CD8-positive, alpha-beta T cell (primary cell): ENCODE measurements at regions of chr7 and their contacts with region 1.

Region 1: DNA sequence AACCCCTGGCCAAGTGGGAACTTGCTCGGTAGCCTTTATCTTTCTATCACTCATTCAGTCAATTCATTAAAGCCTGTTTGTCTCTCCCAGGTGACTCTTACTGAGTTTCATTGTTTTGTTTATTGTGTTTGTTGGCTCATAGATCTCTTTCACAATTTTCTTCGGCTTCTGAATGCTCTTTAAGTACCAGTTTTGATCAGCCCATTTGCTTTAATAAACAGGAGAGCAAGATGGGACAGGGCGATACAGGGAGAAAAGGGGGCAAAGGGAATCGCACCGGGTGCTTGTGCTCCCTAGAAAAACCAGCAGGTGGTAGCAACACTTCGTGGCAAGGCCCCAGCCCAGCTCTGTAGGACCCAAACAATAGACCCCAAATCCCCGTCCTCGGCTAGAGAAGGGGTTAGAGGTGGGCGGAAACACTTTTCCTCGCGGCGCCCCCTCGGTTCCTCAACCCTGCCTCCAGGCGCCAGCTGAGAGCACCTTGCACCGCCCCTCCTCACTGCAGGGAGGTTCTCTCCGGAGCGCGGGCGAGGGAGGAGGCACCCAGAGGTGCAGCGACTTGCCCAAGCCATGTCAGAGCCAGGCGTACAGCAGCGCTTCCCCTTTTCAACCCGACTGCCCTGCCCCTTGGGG is 1.0 kb upstream of the EPHB6 start:
- DNase-seq: peak; percentile 36 to 82 (median 64)
- ATAC-seq: peak; percentile 76
- H3K4me3 ChIP-seq: peak overlapping the region; percentile 58 to 79
- H3K4me3 Mint-ChIP-seq: peak overlapping the region; percentile 98
- H3K27ac ChIP-seq: peak overlapping the region in 1 of 2 experiments; percentile 41
- H3K27ac Mint-ChIP-seq: peak overlapping the region; percentile 91
- H3K4me1 ChIP-seq: peaks cover 9% of the 10 kb centered on the region
- H3K4me1 Mint-ChIP-seq: peaks cover 14% of the 10 kb centered on the region
- H3K27me3 ChIP-seq: no peaks in the 10 kb centered on the region
- H3K27me3 Mint-ChIP-seq: no peaks in the 10 kb centered on the region
- CTCF ChIP-seq: peak; percentile 77

Region 2: DNA sequence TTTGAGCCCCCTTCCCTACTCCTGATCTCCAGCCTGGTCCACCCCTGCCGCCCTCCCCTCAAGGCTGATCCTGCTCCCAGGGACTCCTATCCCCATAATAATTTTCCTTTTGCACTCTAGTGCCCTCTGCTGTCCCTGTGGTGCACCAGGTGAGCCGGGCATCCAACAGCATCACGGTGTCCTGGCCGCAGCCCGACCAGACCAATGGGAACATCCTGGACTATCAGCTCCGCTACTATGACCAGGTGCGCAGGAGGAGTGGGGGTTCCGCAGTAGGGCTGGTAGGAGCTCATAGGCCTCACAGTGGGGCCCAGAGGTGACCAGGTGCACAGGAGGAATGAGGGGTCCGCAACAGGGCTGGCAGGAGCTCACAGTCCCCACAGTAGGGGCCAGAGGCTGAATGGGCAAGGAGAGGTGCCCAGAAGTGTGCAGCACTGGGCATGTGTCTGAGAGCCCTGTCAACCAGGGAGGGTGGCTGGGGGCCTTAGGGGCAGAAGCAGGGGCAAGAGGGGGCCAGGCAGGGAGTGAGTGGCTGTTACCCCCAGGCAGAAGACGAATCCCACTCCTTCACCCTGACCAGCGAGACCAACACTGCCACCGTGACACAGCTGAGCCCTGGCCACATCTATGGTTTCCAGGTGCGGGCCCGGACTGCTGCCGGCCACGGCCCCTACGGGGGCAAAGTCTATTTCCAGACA is 12.7 kb after region 1 on chr7:
- CTCF ChIA-PET with region 1: interaction called, 28 read pairs
- POLR2A ChIA-PET with region 1: no interaction called
- intact Hi-C with region 1: no loop called
- DNase-seq: peak in 2 of 9 experiments; percentile 35 to 40
- ATAC-seq: no peak
- H3K4me3 ChIP-seq: no peak overlapping the region
- H3K4me3 Mint-ChIP-seq: no peak overlapping the region
- H3K27ac ChIP-seq: no peak overlapping the region
- H3K27ac Mint-ChIP-seq: no peak overlapping the region
- H3K4me1 ChIP-seq: no peaks in the 10 kb centered on the region
- H3K4me1 Mint-ChIP-seq: no peaks in the 10 kb centered on the region
- H3K27me3 ChIP-seq: no peaks in the 10 kb centered on the region
- H3K27me3 Mint-ChIP-seq: no peaks in the 10 kb centered on the region
- CTCF ChIP-seq: no peak

Region 3: GRCh38 chr7:142880876-142881505 is 27.1 kb after region 1 on chr7:
- CTCF ChIA-PET with region 1: interaction called, 7 read pairs
- POLR2A ChIA-PET with region 1: no interaction called
- intact Hi-C with region 1: loop called in 1 of 2 experiments (anchors 1 kb)
- DNase-seq: peak; percentile 14 to 70 (median 47)
- ATAC-seq: peak; percentile 80
- H3K4me3 ChIP-seq: no peak overlapping the region
- H3K4me3 Mint-ChIP-seq: no peak overlapping the region
- H3K27ac ChIP-seq: no peak overlapping the region
- H3K27ac Mint-ChIP-seq: no peak overlapping the region
- H3K4me1 ChIP-seq: no peaks in the 10 kb centered on the region
- H3K4me1 Mint-ChIP-seq: no peaks in the 10 kb centered on the region
- H3K27me3 ChIP-seq: peaks cover 0 to 2% of the 10 kb centered on the region in 2 experiments
- H3K27me3 Mint-ChIP-seq: no peaks in the 10 kb centered on the region
- CTCF ChIP-seq: peak; percentile 74

Region 4: GRCh38 chr7:143287935-143288826 is 434.3 kb after region 1 on chr7 and contains the start of gene CASP2:
- CTCF ChIA-PET with region 1: interaction called, 3 read pairs
- POLR2A ChIA-PET with region 1: no interaction called
- intact Hi-C with region 1: loop called in 1 of 2 experiments (anchors 1 kb)
- DNase-seq: peak; percentile 96 to 100 (median 99)
- ATAC-seq: peak; percentile 96
- H3K4me3 ChIP-seq: peak within 1 kb of the TSS; percentile 91 to 95
- H3K4me3 Mint-ChIP-seq: peak within 1 kb of the TSS; percentile 93
- H3K27ac ChIP-seq: peak within 1 kb of the TSS; percentile 64 to 72
- H3K27ac Mint-ChIP-seq: peak within 1 kb of the TSS; percentile 91
- H3K4me1 ChIP-seq: peaks cover 40% of the 10 kb centered on the region
- H3K4me1 Mint-ChIP-seq: peaks cover 53% of the 10 kb centered on the region
- H3K27me3 ChIP-seq: no peaks in the 10 kb centered on the region
- H3K27me3 Mint-ChIP-seq: no peaks in the 10 kb centered on the region
- CTCF ChIP-seq: peak; percentile 31
- total RNA-seq, gene CASP2: 16.0 to 19.1 TPM

Region 5: DNA sequence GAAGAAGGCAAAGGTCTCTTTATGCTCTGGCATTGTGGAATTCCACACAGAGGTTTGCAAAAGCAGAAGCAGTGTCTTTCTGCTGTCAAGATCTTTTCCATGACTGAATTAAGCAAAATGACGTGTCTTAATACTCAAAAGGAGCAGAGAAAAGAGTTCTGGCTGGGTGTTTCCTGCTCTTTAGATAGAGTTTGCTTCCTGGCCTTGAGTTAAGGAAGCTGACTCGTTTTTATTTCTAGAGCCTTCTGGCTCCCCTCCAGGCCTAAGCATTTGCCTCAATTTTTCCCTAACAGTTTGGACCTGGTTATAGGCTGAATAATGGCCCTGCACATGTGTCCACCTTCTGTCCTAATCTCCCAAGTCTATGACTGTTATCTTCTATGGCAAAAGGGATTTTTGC is 645.4 kb after region 1 on chr7:
- CTCF ChIA-PET with region 1: no interaction called
- POLR2A ChIA-PET with region 1: no interaction called
- intact Hi-C with region 1: no loop called
- DNase-seq: no peak
- ATAC-seq: no peak
- H3K4me3 ChIP-seq: no peak overlapping the region
- H3K4me3 Mint-ChIP-seq: no peak overlapping the region
- H3K27ac ChIP-seq: no peak overlapping the region
- H3K27ac Mint-ChIP-seq: no peak overlapping the region
- H3K4me1 ChIP-seq: no peaks in the 10 kb centered on the region
- H3K4me1 Mint-ChIP-seq: no peaks in the 10 kb centered on the region
- H3K27me3 ChIP-seq: no peaks in the 10 kb centered on the region
- H3K27me3 Mint-ChIP-seq: no peaks in the 10 kb centered on the region
- CTCF ChIP-seq: no peak